Mammary epithelial cell (primary cell): ENCODE measurements at regions of chr5 and their contacts with region 1.

Region 1: GRCh38 chr5:83473346-83474163 is 2.0 kb downstream of the VCAN start:
- DNase-seq: peak; percentile 97
- H3K4me3 ChIP-seq: peak overlapping the region; percentile 59 to 68 (median 68)
- H3K27ac ChIP-seq: peak overlapping the region; percentile 96
- H3K4me1 ChIP-seq: peaks cover 28% of the 10 kb centered on the region
- H3K27me3 ChIP-seq: peaks cover under 1% of the 10 kb centered on the region
- CTCF ChIP-seq: peak; percentile 71 to 88

Region 2: GRCh38 chr5:82364497-82364896 is 1109.1 kb before region 1 on chr5:
- CTCF ChIA-PET with region 1: no interaction called
- dilution Hi-C with region 1: no loop called
- in situ Hi-C with region 1: loop called in 1 of 2 experiments (anchors 25 kb)
- intact Hi-C with region 1: loop called (anchors 1 kb)
- DNase-seq: peak; percentile 45
- H3K4me3 ChIP-seq: no peak overlapping the region
- H3K27ac ChIP-seq: peak overlapping the region; percentile 76
- H3K4me1 ChIP-seq: peaks cover 17% of the 10 kb centered on the region
- H3K27me3 ChIP-seq: no peaks in the 10 kb centered on the region
- CTCF ChIP-seq: peak; percentile 31 to 53

Region 3: GRCh38 chr5:82641331-82642003 is 832.1 kb before region 1 on chr5:
- CTCF ChIA-PET with region 1: interaction called, 15 read pairs
- dilution Hi-C with region 1: no loop called
- in situ Hi-C with region 1: loop called in 1 of 2 experiments (anchors 10 kb)
- intact Hi-C with region 1: loop called (anchors 1 kb)
- DNase-seq: peak; percentile 76
- H3K4me3 ChIP-seq: no peak overlapping the region
- H3K27ac ChIP-seq: no peak overlapping the region
- H3K4me1 ChIP-seq: peaks cover under 1% of the 10 kb centered on the region
- H3K27me3 ChIP-seq: no peaks in the 10 kb centered on the region
- CTCF ChIP-seq: peak; percentile 65 to 78

Region 4: GRCh38 chr5:82885627-82886389 is 587.7 kb before region 1 on chr5:
- CTCF ChIA-PET with region 1: no interaction called
- dilution Hi-C with region 1: no loop called
- in situ Hi-C with region 1: no loop called
- intact Hi-C with region 1: loop called (anchors 2 kb)
- DNase-seq: peak; percentile 21
- H3K4me3 ChIP-seq: no peak overlapping the region
- H3K27ac ChIP-seq: no peak overlapping the region
- H3K4me1 ChIP-seq: no peaks in the 10 kb centered on the region
- H3K27me3 ChIP-seq: no peaks in the 10 kb centered on the region
- CTCF ChIP-seq: peak in 1 of 2 donors; percentile 15

Region 5: DNA sequence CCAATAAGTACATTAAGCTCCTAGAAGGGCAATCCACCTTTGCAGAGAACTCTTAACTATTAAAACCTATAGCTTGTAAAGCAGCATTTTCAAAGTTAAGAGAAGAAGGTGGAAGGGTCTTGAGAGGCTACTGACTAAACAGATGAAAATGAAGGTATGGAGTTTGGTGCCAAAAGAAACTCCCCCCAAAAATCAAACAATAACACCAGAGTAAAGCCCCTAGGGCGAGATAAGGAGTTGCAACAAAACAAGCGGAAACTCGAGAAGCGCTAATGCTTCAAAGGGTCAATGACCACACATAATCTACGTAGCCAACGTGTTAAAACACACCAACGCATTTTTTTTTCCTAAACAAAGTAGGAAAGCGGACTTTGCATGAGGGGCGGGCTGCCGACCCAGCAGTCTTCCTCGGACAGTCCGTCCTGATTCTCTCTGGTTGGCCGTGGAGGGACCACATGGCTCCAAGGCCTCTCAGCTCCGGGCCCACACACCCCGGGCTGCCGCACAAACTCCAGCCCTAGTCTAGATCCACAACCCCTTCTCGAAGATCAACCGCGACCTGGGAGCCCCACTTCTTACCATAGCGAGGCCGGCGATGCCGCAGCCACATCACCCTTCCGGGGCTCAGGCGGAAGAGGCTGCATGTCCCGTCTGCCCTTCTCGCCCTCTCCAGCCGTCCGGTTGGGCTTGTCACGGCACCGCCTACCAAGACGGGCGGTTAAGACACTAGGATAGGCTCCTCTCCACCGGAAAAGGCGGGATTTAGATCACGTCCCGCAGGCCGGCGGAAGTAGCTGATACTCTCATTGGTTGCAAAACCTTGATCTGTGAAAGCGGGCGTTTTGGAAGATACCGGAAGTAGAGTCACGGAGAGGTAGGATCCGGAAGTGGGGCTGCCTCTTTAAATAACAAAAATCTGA is 396.6 kb before region 1 on chr5 and contains the starts of genes TMEM167A and XRCC4:
- CTCF ChIA-PET with region 1: interaction called, 4 read pairs
- dilution Hi-C with region 1: no loop called
- in situ Hi-C with region 1: no loop called
- intact Hi-C with region 1: loop called (anchors 1 kb)
- DNase-seq: peak; percentile 98
- H3K4me3 ChIP-seq: peak within 1 kb of the TSS; percentile 75 to 91 (median 86)
- H3K27ac ChIP-seq: peak within 1 kb of the TSS; percentile 87
- H3K4me1 ChIP-seq: peaks cover 8% of the 10 kb centered on the region
- H3K27me3 ChIP-seq: no peaks in the 10 kb centered on the region
- CTCF ChIP-seq: no peak
- total RNA-seq, gene TMEM167A: 49.8 to 88.5 TPM
- total RNA-seq, gene XRCC4: 6.3 to 8.3 TPM

Region 6: GRCh38 chr5:83564069-83564749 is 90.7 kb after region 1 on chr5:
- CTCF ChIA-PET with region 1: interaction called, 6 read pairs
- dilution Hi-C with region 1: no loop called
- in situ Hi-C with region 1: no loop called
- intact Hi-C with region 1: loop called (anchors 1 kb)
- DNase-seq: peak; percentile 21
- H3K4me3 ChIP-seq: no peak overlapping the region
- H3K27ac ChIP-seq: no peak overlapping the region
- H3K4me1 ChIP-seq: peaks cover 12% of the 10 kb centered on the region
- H3K27me3 ChIP-seq: no peaks in the 10 kb centered on the region
- CTCF ChIP-seq: peak; percentile 40 to 51